HepG2 (cell line): ENCODE measurements at regions of chr6 and their contacts with region 1.

Region 1: DNA sequence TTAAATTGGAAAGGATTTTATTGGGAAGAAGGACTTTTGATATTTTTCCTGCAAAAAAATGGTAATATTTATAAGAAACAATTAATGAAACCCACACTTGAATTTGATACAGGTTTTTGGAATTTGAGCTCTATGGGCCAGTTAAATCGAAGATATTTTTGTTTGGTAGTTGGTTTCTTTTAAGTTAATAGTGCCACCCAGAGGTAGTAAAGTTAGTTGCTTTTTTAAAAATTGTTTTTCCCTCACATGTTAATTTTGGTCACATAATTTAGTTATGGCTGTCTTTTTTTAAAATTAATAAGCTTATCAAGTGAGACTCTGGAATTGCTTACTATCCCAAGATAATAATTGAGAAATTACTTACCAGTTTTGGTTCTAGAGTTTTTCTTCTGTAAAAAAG is 7.1 kb downstream of the PRIM2 start:
- DNase-seq: no peak
- ATAC-seq: no peak
- H3K4me3 ChIP-seq: no peak overlapping the region
- H3K27ac ChIP-seq: no peak overlapping the region
- H3K4me1 ChIP-seq: peaks cover 5% of the 10 kb centered on the region
- H3K27me3 ChIP-seq: no peaks in the 10 kb centered on the region
- CTCF ChIP-seq: peak; percentile 36
- EP300 ChIP-seq: no peak
- POLR2A ChIP-seq: no peak
- RAD21 ChIP-seq: peak; percentile 16; the same call in 1 of the 2 replicates

Region 2: DNA sequence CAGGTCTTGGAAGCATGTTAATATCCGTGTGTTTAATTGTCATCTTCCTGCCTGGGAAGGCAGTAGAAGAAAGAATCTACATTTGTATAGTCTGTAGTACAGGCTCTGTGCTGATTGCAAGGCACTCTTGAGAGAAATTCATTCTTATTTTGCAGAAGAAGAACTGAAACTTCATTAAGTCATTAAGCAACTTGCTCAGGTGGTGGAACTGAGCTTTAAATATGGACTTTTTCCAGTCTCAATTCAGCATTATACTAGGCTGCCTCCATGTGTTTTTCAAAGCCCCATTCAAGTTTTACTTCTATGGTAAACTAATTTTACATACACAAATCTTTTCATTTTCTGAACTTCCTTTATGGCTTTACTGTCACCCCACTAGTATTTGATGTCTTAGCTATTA is 215.8 kb before region 1 on chr6:
- CTCF ChIA-PET with region 1: no interaction called
- POLR2A ChIA-PET with region 1: no interaction called
- in situ Hi-C with region 1: no loop called
- intact Hi-C with region 1: no loop called
- DNase-seq: no peak
- ATAC-seq: no peak
- H3K4me3 ChIP-seq: no peak overlapping the region
- H3K27ac ChIP-seq: peak overlapping the region; percentile 4
- H3K4me1 ChIP-seq: peaks cover 71% of the 10 kb centered on the region
- H3K27me3 ChIP-seq: no peaks in the 10 kb centered on the region
- CTCF ChIP-seq: no peak
- EP300 ChIP-seq: no peak
- POLR2A ChIP-seq: no peak
- RAD21 ChIP-seq: no peak

Region 3: GRCh38 chr6:57190140-57190539 is 134.4 kb before region 1 on chr6:
- CTCF ChIA-PET with region 1: interaction called, 7 read pairs
- POLR2A ChIA-PET with region 1: no interaction called
- in situ Hi-C with region 1: loop called (anchors 5 kb)
- intact Hi-C with region 1: loop called (anchors 2 kb)
- DNase-seq: peak; percentile 55
- ATAC-seq: peak; percentile 86
- H3K4me3 ChIP-seq: no peak overlapping the region
- H3K27ac ChIP-seq: no peak overlapping the region
- H3K4me1 ChIP-seq: no peaks in the 10 kb centered on the region
- H3K27me3 ChIP-seq: no peaks in the 10 kb centered on the region
- CTCF ChIP-seq: peak; percentile 45
- EP300 ChIP-seq: no peak
- POLR2A ChIP-seq: no peak
- RAD21 ChIP-seq: peak; percentile 47; the same call in 1 of the 2 replicates

Region 4: DNA sequence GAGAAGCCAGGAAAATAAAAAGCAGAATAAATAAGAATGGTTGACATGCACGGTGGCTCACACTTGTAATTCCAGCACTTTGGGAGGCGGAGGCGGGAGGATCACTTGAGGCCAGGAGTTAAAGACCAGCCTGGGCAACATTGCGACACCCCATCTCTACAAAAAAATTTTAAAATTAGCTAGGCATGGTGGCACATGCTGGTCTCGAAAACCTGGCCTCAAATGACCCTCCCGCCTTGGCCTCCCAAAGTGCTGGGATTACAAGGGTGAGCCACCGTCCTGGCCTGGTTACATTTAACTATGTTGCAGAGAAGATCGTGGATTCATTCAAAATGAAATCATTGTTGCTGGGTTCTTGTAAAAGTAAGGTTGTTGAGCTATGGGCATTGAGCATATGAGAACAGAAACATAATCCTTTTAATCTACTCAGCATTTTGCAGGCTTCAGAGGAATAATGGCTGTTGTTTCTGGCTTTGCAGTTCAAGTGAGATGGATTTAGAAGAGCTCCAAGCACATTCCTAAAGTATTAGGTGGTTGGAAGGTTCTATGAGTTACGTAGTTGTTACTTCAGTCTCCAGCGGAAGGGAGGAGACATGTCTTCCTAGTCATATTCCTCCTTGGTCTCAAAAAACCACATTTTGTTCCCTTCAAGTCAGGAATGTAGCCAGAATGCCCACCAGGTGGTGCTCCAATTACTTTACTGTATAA is 56.8 kb before region 1 on chr6:
- CTCF ChIA-PET with region 1: interaction called, 12 read pairs
- POLR2A ChIA-PET with region 1: no interaction called
- in situ Hi-C with region 1: loop called (anchors 10 kb)
- intact Hi-C with region 1: loop called (anchors 1 kb)
- DNase-seq: peak; percentile 65
- ATAC-seq: peak; percentile 91
- H3K4me3 ChIP-seq: no peak overlapping the region
- H3K27ac ChIP-seq: no peak overlapping the region
- H3K4me1 ChIP-seq: no peaks in the 10 kb centered on the region
- H3K27me3 ChIP-seq: no peaks in the 10 kb centered on the region; a peak in 1 of 5 replicates
- CTCF ChIP-seq: peak; percentile 77
- EP300 ChIP-seq: no peak
- POLR2A ChIP-seq: no peak
- RAD21 ChIP-seq: peak; percentile 62; the same call in 1 of the 2 replicates